Esophagus muscularis mucosa (tissue), 4 donors: ENCODE measurements at regions of chr19 and their contacts with region 1.

Region 1: DNA sequence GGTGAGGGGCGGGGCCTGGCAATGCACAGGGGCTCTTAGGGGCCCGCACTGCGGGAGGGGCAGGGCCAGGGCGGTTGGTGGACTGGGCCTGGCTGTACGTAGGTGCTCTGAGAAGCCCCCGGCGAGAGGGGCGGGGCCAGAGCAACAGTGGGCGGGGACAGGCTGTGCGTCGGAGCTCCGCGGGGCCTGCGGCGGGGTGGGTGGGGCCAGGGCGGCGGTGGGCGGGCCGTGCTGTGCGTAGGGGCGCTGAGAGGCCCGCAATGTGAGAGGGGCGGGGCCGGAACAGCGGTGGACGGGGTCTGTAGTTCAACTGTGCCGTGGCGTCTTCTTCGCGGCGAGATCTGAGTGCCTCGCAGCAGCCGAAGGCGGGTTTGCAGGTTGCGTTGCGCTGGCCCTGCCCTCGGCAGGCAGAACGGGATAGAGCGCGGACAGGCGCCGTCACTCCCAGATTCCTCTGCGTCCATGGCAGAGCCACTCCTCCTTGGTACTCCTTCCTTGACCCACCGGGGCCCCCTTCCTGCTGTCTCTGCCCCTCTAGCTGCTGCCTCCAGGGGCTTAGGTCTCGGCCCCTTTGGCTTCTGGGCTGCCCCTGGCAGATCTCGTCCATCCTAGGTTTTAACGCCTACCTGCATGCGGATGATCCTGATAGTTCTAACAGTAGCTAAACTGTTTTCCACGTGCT is 33.2 kb downstream of the CCNE1 start:
- DNase-seq: peak; percentile 98
- H3K4me3 ChIP-seq: peak overlapping the region; percentile 55 to 87 (median 75)
- H3K27ac ChIP-seq: peak overlapping the region; percentile 84 to 90 (median 89)
- H3K4me1 ChIP-seq: peaks cover 20 to 28% (median 27%) of the 10 kb centered on the region in 4 donors
- H3K27me3 ChIP-seq: peaks cover 0 to 8% (median 0%) of the 10 kb centered on the region in 4 donors
- CTCF ChIP-seq: no peak
- EP300 ChIP-seq: no peak
- POLR2A ChIP-seq: no peak

Region 2: DNA sequence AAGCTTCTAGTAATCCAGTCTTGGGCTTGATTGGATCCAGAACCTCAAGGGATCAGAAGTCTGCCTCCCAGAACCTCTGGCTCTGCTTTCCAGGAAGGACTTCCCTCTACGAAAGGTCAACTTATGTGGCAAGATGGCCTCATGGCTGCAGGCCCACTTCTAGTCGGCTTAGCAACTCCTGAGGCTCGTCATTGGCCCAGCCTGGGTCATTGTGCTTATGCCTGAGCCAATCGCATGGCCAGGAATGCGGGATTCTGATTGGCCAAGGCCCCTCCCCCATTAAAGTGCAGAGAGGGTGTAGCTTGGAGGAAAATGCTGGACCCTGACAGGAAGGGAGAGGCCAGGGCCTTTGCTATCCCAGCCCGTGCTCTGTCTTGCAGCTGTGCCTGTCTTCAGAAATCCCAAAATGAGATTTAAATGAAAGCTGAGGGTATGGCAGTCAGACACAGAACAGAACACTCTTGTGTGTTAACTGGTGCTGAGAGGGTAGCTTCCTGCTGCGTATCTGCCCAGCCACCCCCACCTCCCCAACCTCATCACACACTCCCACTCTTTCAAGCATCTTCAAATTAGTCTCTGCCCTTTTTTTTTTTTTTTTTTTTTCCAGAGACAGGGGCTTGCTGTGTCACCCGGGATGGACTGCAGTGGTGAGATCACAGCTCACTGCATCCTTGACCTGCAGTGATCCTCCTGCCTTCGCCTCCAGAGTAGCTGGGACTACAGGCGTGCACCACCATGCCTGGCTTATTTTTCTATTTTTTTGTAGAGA is 38.8 kb before region 1 on chr19:
- intact Hi-C with region 1: loop called (anchors 5 kb)
- DNase-seq: no peak
- H3K4me3 ChIP-seq: no peak overlapping the region
- H3K27ac ChIP-seq: no peak overlapping the region
- H3K4me1 ChIP-seq: peaks cover 0 to 16% (median 10%) of the 10 kb centered on the region in 4 donors
- H3K27me3 ChIP-seq: no peaks in the 10 kb centered on the region
- CTCF ChIP-seq: no peak
- EP300 ChIP-seq: no peak
- POLR2A ChIP-seq: no peak